Activated CD4-positive, alpha-beta T cell treated with anti-CD3 and anti-CD28 coated beads for 36 hours (primary cell): ENCODE measurements at regions of chr4 and their contacts with region 1.

Region 1: DNA sequence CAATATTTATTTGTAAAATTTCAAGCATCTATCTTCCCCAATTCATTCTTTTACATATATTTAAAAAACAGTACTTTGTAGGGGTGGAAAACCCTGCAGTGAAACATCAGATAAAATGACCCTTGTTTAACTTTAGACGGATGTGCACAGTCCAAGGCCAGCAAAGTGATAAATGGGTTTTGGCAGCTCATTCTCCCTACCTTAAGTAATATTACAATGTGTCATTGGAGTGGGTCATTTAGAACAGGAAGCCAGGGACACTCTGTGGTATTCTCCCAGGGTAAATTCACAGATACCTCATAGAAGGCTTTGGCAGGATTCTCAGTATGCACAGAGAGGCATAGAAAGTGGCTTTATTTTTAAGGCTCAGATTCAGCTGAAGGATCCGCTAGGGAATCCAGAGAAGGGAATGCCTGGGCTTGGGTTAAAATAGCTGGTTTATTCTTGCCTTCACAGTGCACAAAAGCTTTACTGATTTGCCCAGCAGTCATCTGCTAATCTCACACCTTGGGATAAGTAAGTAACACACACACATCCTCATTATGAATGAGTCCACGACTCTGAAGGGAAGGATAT is 206.7 kb downstream of the RASL11B start:
- DNase-seq: no peak
- ATAC-seq: no peak
- H3K4me3 Mint-ChIP-seq: no peak overlapping the region
- H3K27ac Mint-ChIP-seq: no peak overlapping the region
- H3K4me1 Mint-ChIP-seq: peaks cover 6% of the 10 kb centered on the region
- H3K27me3 Mint-ChIP-seq: no peaks in the 10 kb centered on the region

Region 2: GRCh38 chr4:53119680-53120079 is 50.8 kb after region 1 on chr4:
- CTCF ChIA-PET with region 1: no interaction called
- POLR2A ChIA-PET with region 1: no interaction called
- intact Hi-C with region 1: loop called in 1 of 2 experiments (anchors 5 kb)
- DNase-seq: no peak
- ATAC-seq: no peak
- H3K4me3 Mint-ChIP-seq: no peak overlapping the region
- H3K27ac Mint-ChIP-seq: no peak overlapping the region
- H3K4me1 Mint-ChIP-seq: peaks cover 19% of the 10 kb centered on the region
- H3K27me3 Mint-ChIP-seq: no peaks in the 10 kb centered on the region

Region 3: GRCh38 chr4:53507671-53508286 is 438.9 kb after region 1 on chr4:
- CTCF ChIA-PET with region 1: no interaction called
- POLR2A ChIA-PET with region 1: no interaction called
- intact Hi-C with region 1: no loop called
- DNase-seq: no peak
- ATAC-seq: no peak
- H3K4me3 Mint-ChIP-seq: no peak overlapping the region
- H3K27ac Mint-ChIP-seq: no peak overlapping the region
- H3K4me1 Mint-ChIP-seq: no peaks in the 10 kb centered on the region
- H3K27me3 Mint-ChIP-seq: peaks cover 9% of the 10 kb centered on the region